CD4-positive, alpha-beta memory T cell (primary cell): ENCODE measurements at regions of chr3 and their contacts with region 1.

Region 1: GRCh38 chr3:122586098-122586497 is 8.6 kb downstream of the PARP15 start:
- DNase-seq: no peak
- H3K4me3 ChIP-seq: no peak overlapping the region
- H3K4me3 Mint-ChIP-seq: no peak overlapping the region
- H3K27ac ChIP-seq: no peak overlapping the region
- H3K27ac Mint-ChIP-seq: no peak overlapping the region
- H3K4me1 ChIP-seq: peaks cover 14% of the 10 kb centered on the region
- H3K4me1 Mint-ChIP-seq: peaks cover 14 to 39% (median 21%) of the 10 kb centered on the region in 4 donors
- H3K27me3 ChIP-seq: no peaks in the 10 kb centered on the region
- H3K27me3 Mint-ChIP-seq: no peaks in the 10 kb centered on the region

Region 2: GRCh38 chr3:122564155-122564912 is 21.8 kb before region 1 on chr3 and contains the starts of genes DTX3L and PARP9:
- CTCF ChIA-PET with region 1: interaction called, 5 read pairs
- POLR2A ChIA-PET with region 1: interaction called, 12 read pairs
- intact Hi-C with region 1: no loop called
- DNase-seq: peak; percentile 79 to 87 (median 81)
- H3K4me3 ChIP-seq: peak within 1 kb of the TSS; percentile 78 to 94
- H3K4me3 Mint-ChIP-seq: peak within 1 kb of the TSS; percentile 92 to 98 (median 96)
- H3K27ac ChIP-seq: peak within 1 kb of the TSS; percentile 95
- H3K27ac Mint-ChIP-seq: peak within 1 kb of the TSS; percentile 90 to 99 (median 97)
- H3K4me1 ChIP-seq: peaks cover 70% of the 10 kb centered on the region
- H3K4me1 Mint-ChIP-seq: peaks cover 55 to 85% (median 70%) of the 10 kb centered on the region in 4 donors
- H3K27me3 ChIP-seq: no peaks in the 10 kb centered on the region
- H3K27me3 Mint-ChIP-seq: no peaks in the 10 kb centered on the region
- total RNA-seq, gene DTX3L: 49.3 to 51.0 TPM
- total RNA-seq, gene PARP9: 24.0 to 26.0 TPM